Endothelial cell of umbilical vein (primary cell): ENCODE measurements at regions of chr12 and their contacts with region 1.

Region 1: DNA sequence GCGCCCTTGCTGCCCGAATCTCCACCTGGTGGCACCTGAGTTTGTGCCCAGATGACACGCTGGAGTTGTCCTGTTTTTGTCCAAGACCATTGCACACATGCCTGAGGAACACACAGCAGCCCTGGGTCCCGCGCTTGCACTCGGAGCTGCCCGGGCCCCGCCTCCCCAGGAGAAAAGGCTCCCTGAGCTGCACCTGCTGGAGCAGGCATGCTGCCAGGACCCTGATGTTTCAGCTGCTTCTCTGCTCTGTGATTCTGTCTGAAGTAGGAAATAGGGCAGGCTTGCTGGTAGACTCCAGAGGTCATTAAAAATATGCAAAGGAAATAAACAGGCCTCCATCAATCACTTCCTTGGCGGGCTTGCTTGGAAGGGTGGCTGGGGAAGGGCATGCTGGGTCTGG is 271.6 kb downstream of the CACNA1C start:
- DNase-seq: peak; percentile 89
- H3K4me3 ChIP-seq: no peak overlapping the region
- H3K27ac ChIP-seq: no peak overlapping the region
- H3K4me1 ChIP-seq: no peaks in the 10 kb centered on the region
- H3K27me3 ChIP-seq: peaks cover 2 to 3% of the 10 kb centered on the region in 2 experiments
- CTCF ChIP-seq: no peak
- POLR2A ChIP-seq: no peak

Region 2: DNA sequence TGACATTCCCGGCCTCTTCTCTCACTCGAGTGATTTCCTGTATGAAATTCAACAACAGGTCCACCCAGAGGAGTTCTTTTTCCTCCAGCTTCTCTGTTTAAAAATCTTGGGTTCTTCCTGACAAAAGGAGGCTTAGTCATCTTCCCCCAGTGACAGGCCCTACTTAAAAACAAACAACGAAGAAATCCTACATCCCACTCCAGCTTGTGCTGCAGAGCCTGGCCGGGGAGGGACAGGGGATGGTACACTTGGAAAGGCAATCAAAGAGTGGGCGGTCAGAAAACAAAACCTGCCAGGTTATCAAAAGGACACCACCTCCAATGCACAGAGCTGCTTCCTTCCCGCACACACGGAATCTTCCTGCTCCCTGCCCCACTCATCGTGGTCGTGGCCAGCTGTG is 170.3 kb before region 1 on chr12:
- CTCF ChIA-PET with region 1: no interaction called
- POLR2A ChIA-PET with region 1: no interaction called
- dilution Hi-C with region 1: no loop called
- intact Hi-C with region 1: no loop called
- DNase-seq: no peak
- H3K4me3 ChIP-seq: no peak overlapping the region
- H3K27ac ChIP-seq: no peak overlapping the region
- H3K4me1 ChIP-seq: no peaks in the 10 kb centered on the region
- H3K27me3 ChIP-seq: no peaks in the 10 kb centered on the region
- CTCF ChIP-seq: no peak
- POLR2A ChIP-seq: no peak

Region 3: DNA sequence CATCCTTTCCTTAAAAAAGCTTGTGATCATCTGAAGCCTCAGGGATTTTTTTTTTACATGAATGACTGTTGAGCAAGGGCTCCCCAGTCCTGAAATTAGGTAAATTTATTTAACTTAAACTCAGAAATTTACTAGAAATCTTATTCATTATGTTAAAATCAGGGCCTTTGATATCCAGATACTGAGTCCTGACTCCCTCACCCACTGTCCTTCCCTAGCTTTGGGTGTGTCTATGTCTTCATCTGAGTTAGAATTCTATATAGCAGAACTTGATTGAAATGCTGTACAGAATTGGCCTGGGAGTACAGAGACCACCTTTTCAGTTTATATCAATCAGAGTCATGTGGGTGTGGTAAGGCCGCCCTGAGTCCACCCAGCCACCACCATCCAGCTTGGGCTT is 11.6 kb before region 1 on chr12:
- CTCF ChIA-PET with region 1: no interaction called
- POLR2A ChIA-PET with region 1: no interaction called
- dilution Hi-C with region 1: no loop called
- intact Hi-C with region 1: no loop called
- DNase-seq: no peak
- H3K4me3 ChIP-seq: no peak overlapping the region
- H3K27ac ChIP-seq: no peak overlapping the region
- H3K4me1 ChIP-seq: no peaks in the 10 kb centered on the region
- H3K27me3 ChIP-seq: no peaks in the 10 kb centered on the region
- CTCF ChIP-seq: no peak
- POLR2A ChIP-seq: no peak

Region 4: DNA sequence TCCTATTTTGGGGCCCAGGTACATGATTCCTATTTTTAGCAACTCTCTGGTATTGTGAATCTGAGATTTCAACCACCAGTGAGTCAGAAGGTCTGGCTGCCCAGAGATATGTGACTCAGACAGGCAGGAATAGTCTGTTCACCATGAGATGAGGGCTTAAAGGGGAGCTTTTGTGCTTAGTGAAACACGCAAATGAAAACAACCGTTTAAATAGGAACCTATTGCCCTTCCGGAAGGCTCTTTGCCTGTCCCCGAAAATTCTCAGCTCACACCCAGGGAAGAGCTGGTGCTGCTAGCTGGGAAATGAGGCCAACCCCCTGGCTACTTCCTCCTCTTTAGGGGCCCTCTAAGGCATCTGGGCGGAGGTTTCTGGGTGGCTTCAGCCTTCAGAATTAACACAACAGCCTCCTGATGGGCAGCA is 12.0 kb after region 1 on chr12:
- CTCF ChIA-PET with region 1: no interaction called
- POLR2A ChIA-PET with region 1: no interaction called
- dilution Hi-C with region 1: no loop called
- intact Hi-C with region 1: loop called (anchors 1 kb)
- DNase-seq: peak; percentile 86
- H3K4me3 ChIP-seq: no peak overlapping the region
- H3K27ac ChIP-seq: peak overlapping the region; percentile 87
- H3K4me1 ChIP-seq: peaks cover 41% of the 10 kb centered on the region
- H3K27me3 ChIP-seq: no peaks in the 10 kb centered on the region
- CTCF ChIP-seq: no peak
- POLR2A ChIP-seq: peak; percentile 28